IMR-90 (cell line): ENCODE measurements at regions of chr3 and their contacts with region 1.

Region 1: GRCh38 chr3:57852896-57853295 is 96.8 kb downstream of the SLMAP start:
- DNase-seq: peak; percentile 55
- ATAC-seq: peak; percentile 69
- H3K4me3 ChIP-seq: no peak overlapping the region
- H3K27ac ChIP-seq: no peak overlapping the region
- H3K4me1 ChIP-seq: no peaks in the 10 kb centered on the region
- H3K27me3 ChIP-seq: no peaks in the 10 kb centered on the region
- CTCF ChIP-seq: peak; percentile 53
- POLR2A ChIP-seq: no peak
- RAD21 ChIP-seq: peak; percentile 45

Region 2: GRCh38 chr3:57100046-57100695 is 752.7 kb before region 1 on chr3:
- CTCF ChIA-PET with region 1: no interaction called
- POLR2A ChIA-PET with region 1: no interaction called
- dilution Hi-C with region 1: no loop called
- in situ Hi-C with region 1: no loop called
- intact Hi-C with region 1: loop called (anchors 1 kb)
- DNase-seq: peak; percentile 75
- ATAC-seq: peak; percentile 97
- H3K4me3 ChIP-seq: no peak overlapping the region
- H3K27ac ChIP-seq: no peak overlapping the region
- H3K4me1 ChIP-seq: peaks cover 3% of the 10 kb centered on the region; the same call in 1 of the 2 replicates
- H3K27me3 ChIP-seq: no peaks in the 10 kb centered on the region
- CTCF ChIP-seq: peak; percentile 93
- POLR2A ChIP-seq: no peak
- RAD21 ChIP-seq: peak; percentile 91

Region 3: GRCh38 chr3:57169872-57170623 is 682.8 kb before region 1 on chr3:
- CTCF ChIA-PET with region 1: no interaction called
- POLR2A ChIA-PET with region 1: no interaction called
- dilution Hi-C with region 1: no loop called
- in situ Hi-C with region 1: no loop called
- intact Hi-C with region 1: loop called (anchors 5 kb)
- DNase-seq: peak; percentile 52
- ATAC-seq: peak; percentile 85
- H3K4me3 ChIP-seq: peak overlapping the region; percentile 43
- H3K27ac ChIP-seq: no peak overlapping the region
- H3K4me1 ChIP-seq: peaks cover 3% of the 10 kb centered on the region; the same call in 1 of the 2 replicates
- H3K27me3 ChIP-seq: peaks cover 20% of the 10 kb centered on the region
- CTCF ChIP-seq: peak; percentile 77
- POLR2A ChIP-seq: no peak
- RAD21 ChIP-seq: peak; percentile 76

Region 4: DNA sequence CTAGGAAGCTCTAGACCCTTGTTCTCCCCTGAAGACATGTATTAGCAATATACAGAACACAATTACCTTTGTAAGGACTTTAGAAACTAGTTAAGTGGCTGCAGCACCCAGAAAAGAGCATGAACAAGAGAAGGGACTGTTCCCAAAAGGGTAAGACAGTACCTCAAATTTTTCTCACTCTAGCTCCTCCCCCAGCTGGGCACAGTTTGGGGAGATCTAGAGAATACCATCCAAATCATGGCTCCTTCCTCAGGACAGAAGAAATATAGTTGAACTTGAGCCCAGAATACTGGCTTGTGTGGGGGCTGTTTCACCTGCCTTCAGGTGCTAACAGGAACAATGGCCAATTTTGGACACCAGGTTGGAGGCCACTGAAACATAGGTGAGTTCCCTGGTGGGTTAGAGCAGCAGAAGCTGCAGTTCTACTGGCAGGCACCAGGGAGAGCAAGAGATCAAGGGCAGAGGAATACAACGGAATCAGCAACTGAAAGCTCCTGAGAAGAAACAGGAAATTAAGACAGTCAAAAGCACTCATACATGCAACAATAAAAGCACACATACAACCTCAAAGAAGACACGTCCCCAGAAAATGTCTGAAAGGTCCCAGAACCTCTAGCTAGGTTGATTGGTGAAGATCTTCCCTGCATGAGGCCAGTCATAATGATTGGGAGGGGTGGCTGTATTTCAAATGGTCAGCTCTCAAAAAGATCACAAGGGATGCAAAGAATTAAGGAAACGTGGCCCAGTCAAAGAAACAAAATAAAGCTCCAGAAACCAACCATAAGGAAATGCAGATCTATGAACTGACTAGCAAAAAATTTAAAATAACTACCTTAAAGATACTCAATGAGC is 455.5 kb before region 1 on chr3:
- CTCF ChIA-PET with region 1: interaction called, 3 read pairs
- POLR2A ChIA-PET with region 1: no interaction called
- dilution Hi-C with region 1: no loop called
- in situ Hi-C with region 1: loop called (anchors 25 kb)
- intact Hi-C with region 1: loop called (anchors 2 kb)
- DNase-seq: peak; percentile 42
- ATAC-seq: peak; percentile 96
- H3K4me3 ChIP-seq: no peak overlapping the region
- H3K27ac ChIP-seq: no peak overlapping the region
- H3K4me1 ChIP-seq: no peaks in the 10 kb centered on the region
- H3K27me3 ChIP-seq: no peaks in the 10 kb centered on the region; the same call in 1 of the 2 replicates
- CTCF ChIP-seq: peak; percentile 70
- POLR2A ChIP-seq: no peak
- RAD21 ChIP-seq: peak; percentile 74

Region 5: GRCh38 chr3:57597122-57597923 is 255.6 kb before region 1 on chr3 and contains the start of gene ARF4:
- CTCF ChIA-PET with region 1: interaction called, 3 read pairs
- POLR2A ChIA-PET with region 1: no interaction called
- dilution Hi-C with region 1: no loop called
- in situ Hi-C with region 1: no loop called
- intact Hi-C with region 1: loop called (anchors 5 kb)
- DNase-seq: peak; percentile 99
- ATAC-seq: peak; percentile 89
- H3K4me3 ChIP-seq: peak within 1 kb of the TSS; percentile 80
- H3K27ac ChIP-seq: peak within 1 kb of the TSS; percentile 96
- H3K4me1 ChIP-seq: peaks cover 6% of the 10 kb centered on the region
- H3K27me3 ChIP-seq: no peaks in the 10 kb centered on the region
- CTCF ChIP-seq: peak; percentile 44
- POLR2A ChIP-seq: peak; percentile 99
- RAD21 ChIP-seq: no peak
- total RNA-seq, gene ARF4: 172 and 290 TPM in 2 replicates

Region 6: GRCh38 chr3:57659806-57660439 is 193.0 kb before region 1 on chr3:
- CTCF ChIA-PET with region 1: no interaction called
- POLR2A ChIA-PET with region 1: no interaction called
- dilution Hi-C with region 1: no loop called
- in situ Hi-C with region 1: no loop called
- intact Hi-C with region 1: loop called (anchors 10 kb)
- DNase-seq: no peak
- ATAC-seq: no peak
- H3K4me3 ChIP-seq: no peak overlapping the region
- H3K27ac ChIP-seq: no peak overlapping the region
- H3K4me1 ChIP-seq: no peaks in the 10 kb centered on the region
- H3K27me3 ChIP-seq: no peaks in the 10 kb centered on the region
- CTCF ChIP-seq: no peak
- POLR2A ChIP-seq: no peak
- RAD21 ChIP-seq: no peak

Region 7: GRCh38 chr3:57755668-57756527 is 97.0 kb before region 1 on chr3 and contains the start of gene SLMAP:
- CTCF ChIA-PET with region 1: no interaction called
- POLR2A ChIA-PET with region 1: no interaction called
- dilution Hi-C with region 1: no loop called
- in situ Hi-C with region 1: no loop called
- intact Hi-C with region 1: loop called (anchors 2 kb)
- DNase-seq: peak; percentile 96
- ATAC-seq: peak; percentile 95
- H3K4me3 ChIP-seq: peak within 1 kb of the TSS; percentile 84
- H3K27ac ChIP-seq: peak within 1 kb of the TSS; percentile 88
- H3K4me1 ChIP-seq: peaks cover 4% of the 10 kb centered on the region
- H3K27me3 ChIP-seq: no peaks in the 10 kb centered on the region
- CTCF ChIP-seq: no peak
- POLR2A ChIP-seq: peak; percentile 68; the same call in 1 of the 2 replicates
- RAD21 ChIP-seq: no peak
- total RNA-seq, gene SLMAP: 26.5 and 32.2 TPM in 2 replicates

Region 8: GRCh38 chr3:58604031-58604430 is 751.1 kb after region 1 on chr3:
- CTCF ChIA-PET with region 1: no interaction called
- POLR2A ChIA-PET with region 1: no interaction called
- dilution Hi-C with region 1: no loop called
- in situ Hi-C with region 1: no loop called
- intact Hi-C with region 1: no loop called
- DNase-seq: no peak
- ATAC-seq: no peak
- H3K4me3 ChIP-seq: no peak overlapping the region
- H3K27ac ChIP-seq: no peak overlapping the region
- H3K4me1 ChIP-seq: no peaks in the 10 kb centered on the region
- H3K27me3 ChIP-seq: peaks cover 50% of the 10 kb centered on the region
- CTCF ChIP-seq: no peak
- POLR2A ChIP-seq: no peak
- RAD21 ChIP-seq: no peak